ENCODE measurements at regions of chr9 and their contacts with region 1.

Region 1: GRCh38 chr9:87812375-87813118 is 70.1 kb upstream of the SPATA31E1 start:
- DNase-seq: peak; percentile 66
- ATAC-seq: peak; percentile 91
- H3K4me3 ChIP-seq: no peak overlapping the region
- H3K27ac ChIP-seq: no peak overlapping the region
- H3K4me1 ChIP-seq: no peaks in the 10 kb centered on the region
- H3K27me3 ChIP-seq: peaks cover 15% of the 10 kb centered on the region
- CTCF ChIP-seq: peak; percentile 92
- POLR2A ChIP-seq: no peak
- RAD21 ChIP-seq: peak; percentile 83

Region 2: GRCh38 chr9:87678650-87679515 is 133.7 kb before region 1 on chr9:
- CTCF ChIA-PET with region 1: interaction called, 13 read pairs
- POLR2A ChIA-PET with region 1: no interaction called
- dilution Hi-C with region 1: no loop called
- in situ Hi-C with region 1: loop called (anchors 5 kb)
- intact Hi-C with region 1: loop called (anchors 1 kb)
- DNase-seq: peak; percentile 74
- ATAC-seq: peak; percentile 88
- H3K4me3 ChIP-seq: no peak overlapping the region
- H3K27ac ChIP-seq: no peak overlapping the region
- H3K4me1 ChIP-seq: no peaks in the 10 kb centered on the region
- H3K27me3 ChIP-seq: peaks cover 2% of the 10 kb centered on the region; the same call in 1 of the 2 replicates
- CTCF ChIP-seq: peak; percentile 91
- POLR2A ChIP-seq: no peak
- RAD21 ChIP-seq: peak; percentile 89

Region 3: DNA sequence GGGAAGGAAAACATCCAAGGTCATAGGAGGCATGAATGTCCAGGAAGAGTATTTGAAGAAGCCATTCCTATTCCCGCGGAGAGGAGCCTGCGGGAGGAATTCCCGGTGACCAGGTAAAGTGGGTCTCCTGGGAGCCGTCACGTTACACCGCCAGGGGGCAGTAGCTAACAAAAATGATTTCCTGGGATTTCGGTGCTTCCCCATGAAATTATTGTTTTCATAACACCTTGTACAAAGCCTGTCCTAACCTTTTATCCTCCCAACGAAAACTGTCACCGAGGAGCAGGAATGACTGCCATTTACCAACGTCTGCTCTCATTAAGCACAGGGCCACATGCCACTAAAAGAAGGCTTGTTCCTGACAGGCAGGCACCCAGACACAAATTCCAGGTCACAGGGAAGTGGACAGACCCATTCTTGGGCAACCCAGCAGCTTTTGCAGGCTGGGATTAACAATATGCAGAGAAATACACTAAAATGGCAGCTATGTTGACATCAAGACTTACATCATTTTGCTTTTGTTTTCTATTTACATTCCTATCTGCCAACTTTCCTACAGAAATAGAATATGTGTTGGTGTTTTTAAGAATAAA is 127.8 kb before region 1 on chr9:
- CTCF ChIA-PET with region 1: interaction called, 13 read pairs
- POLR2A ChIA-PET with region 1: no interaction called
- dilution Hi-C with region 1: no loop called
- in situ Hi-C with region 1: loop called (anchors 5 kb)
- intact Hi-C with region 1: loop called (anchors 1 kb)
- DNase-seq: peak; percentile 24
- ATAC-seq: peak; percentile 40; the same call in 1 of the 2 replicates
- H3K4me3 ChIP-seq: no peak overlapping the region
- H3K27ac ChIP-seq: no peak overlapping the region
- H3K4me1 ChIP-seq: peaks cover 4% of the 10 kb centered on the region
- H3K27me3 ChIP-seq: peaks cover 2% of the 10 kb centered on the region
- CTCF ChIP-seq: peak; percentile 70
- POLR2A ChIP-seq: no peak
- RAD21 ChIP-seq: peak; percentile 68

Region 4: DNA sequence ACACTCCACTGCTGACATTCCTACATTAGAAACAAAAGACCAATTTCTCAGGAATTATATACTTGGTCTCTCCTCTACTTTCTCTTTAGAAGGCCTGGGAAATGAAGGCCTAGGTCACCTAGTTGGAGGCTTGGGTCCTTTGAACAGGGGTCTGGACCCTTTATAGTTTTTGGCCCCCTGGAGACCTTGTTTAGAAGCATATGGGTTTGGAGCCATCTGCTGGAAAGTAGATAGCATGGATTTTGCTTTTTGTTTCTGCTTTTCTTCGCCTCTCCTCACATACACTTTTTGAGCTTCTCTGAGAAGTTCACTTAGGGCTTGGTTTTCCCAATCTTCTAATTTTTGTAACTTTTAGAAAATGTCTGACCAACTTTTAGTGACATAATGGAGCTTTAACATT is 228.9 kb after region 1 on chr9:
- CTCF ChIA-PET with region 1: no interaction called
- POLR2A ChIA-PET with region 1: no interaction called
- dilution Hi-C with region 1: no loop called
- in situ Hi-C with region 1: no loop called
- intact Hi-C with region 1: loop called (anchors 2 kb)
- DNase-seq: peak; percentile 22
- ATAC-seq: no peak; the same call in 1 of the 2 replicates
- H3K4me3 ChIP-seq: no peak overlapping the region
- H3K27ac ChIP-seq: no peak overlapping the region
- H3K4me1 ChIP-seq: no peaks in the 10 kb centered on the region
- H3K27me3 ChIP-seq: no peaks in the 10 kb centered on the region
- CTCF ChIP-seq: peak; percentile 54
- POLR2A ChIP-seq: no peak
- RAD21 ChIP-seq: peak; percentile 60